Mammary epithelial cell (primary cell): ENCODE measurements at regions of chr19 and their contacts with region 1.

Region 1: GRCh38 chr19:12796146-12797071 is 5.1 kb downstream of the JUNB start:
- DNase-seq: peak; percentile 58
- H3K4me3 ChIP-seq: no peak overlapping the region
- H3K27ac ChIP-seq: no peak overlapping the region
- H3K4me1 ChIP-seq: peaks cover 24% of the 10 kb centered on the region
- H3K27me3 ChIP-seq: no peaks in the 10 kb centered on the region
- CTCF ChIP-seq: peak; percentile 97

Region 2: DNA sequence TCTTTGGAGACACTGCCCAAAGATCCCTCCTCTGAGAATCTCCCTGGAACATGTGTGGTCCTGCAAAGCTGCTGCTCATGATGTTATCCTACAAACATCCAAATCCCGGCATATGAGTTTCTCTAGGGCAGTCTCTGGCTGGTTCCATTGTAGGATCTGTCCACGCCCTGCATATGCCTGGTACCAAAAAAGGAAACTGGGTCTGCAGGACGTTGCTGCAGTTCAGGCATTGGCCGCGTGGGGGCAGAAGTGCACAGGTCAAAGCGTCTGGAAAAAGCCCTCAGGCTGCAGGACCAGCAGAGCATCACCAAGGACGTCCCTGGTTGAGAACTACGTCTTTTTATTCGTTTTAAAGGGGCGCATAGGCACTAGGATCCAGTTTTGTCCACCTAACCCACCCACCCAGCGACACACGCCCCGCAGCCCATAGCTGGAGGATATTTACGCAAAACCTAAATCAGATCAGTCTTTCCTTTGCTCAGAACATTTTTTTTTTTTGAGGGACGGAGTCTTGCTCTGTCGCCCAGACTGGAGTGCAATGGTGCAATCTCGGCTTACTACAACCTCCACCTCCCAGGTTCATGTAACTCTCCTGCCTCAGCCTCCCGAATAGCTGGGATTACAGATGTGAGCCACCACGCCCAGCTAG is 232.3 kb before region 1 on chr19:
- CTCF ChIA-PET with region 1: no interaction called
- dilution Hi-C with region 1: no loop called
- in situ Hi-C with region 1: no loop called
- intact Hi-C with region 1: loop called (anchors 2 kb)
- DNase-seq: peak; percentile 88
- H3K4me3 ChIP-seq: no peak overlapping the region
- H3K27ac ChIP-seq: no peak overlapping the region
- H3K4me1 ChIP-seq: no peaks in the 10 kb centered on the region
- H3K27me3 ChIP-seq: no peaks in the 10 kb centered on the region
- CTCF ChIP-seq: peak; percentile 96 to 97

Region 3: GRCh38 chr19:12669270-12670158 is 126.9 kb before region 1 on chr19:
- CTCF ChIA-PET with region 1: no interaction called
- dilution Hi-C with region 1: no loop called
- in situ Hi-C with region 1: no loop called
- intact Hi-C with region 1: no loop called
- DNase-seq: peak; percentile 79
- H3K4me3 ChIP-seq: peak overlapping the region; percentile 69 to 87 (median 86)
- H3K27ac ChIP-seq: peak overlapping the region; percentile 96
- H3K4me1 ChIP-seq: peaks cover 34% of the 10 kb centered on the region
- H3K27me3 ChIP-seq: no peaks in the 10 kb centered on the region
- CTCF ChIP-seq: no peak

Region 4: DNA sequence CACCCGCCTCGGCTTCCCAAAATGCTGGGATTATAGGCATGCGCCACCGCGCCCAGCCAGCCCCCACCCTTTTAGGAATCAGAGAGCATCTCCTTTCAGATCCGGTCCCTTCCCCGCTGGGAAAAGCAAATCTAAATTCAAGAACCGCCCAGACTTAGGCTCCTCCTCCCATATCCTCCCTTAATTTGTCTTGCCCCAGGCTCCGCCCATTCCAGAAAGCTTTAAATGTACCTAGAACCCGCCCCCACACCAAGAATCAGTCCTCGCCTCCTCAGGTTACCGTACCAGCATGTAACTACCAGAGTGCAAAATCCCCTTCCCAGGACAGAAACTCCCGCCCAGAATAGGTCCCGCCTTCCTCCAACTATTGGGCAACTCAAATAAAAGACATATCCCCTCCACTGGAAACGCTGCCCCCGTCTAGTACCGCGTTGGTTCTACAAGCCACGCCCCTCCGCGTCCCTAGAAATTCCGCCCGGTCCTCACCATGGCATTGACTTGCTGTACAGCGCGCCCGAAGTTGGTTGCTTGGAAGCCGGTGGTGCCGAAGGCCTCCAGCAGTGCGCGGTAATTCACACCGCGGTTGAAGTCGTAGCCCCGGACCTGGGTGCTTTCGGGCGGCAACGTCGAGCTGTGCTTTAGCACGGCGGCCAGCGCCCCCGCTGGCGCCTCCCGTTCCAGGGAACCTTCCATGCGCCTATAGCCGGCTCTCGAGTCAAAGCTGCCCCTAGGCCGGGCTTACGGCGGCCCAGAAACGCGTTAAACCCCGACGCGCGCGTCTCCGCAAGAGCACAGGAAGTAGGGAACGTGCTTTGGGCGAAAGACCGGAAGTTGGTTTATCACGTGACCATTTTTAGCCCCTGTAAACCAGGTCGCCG is 115.1 kb before region 1 on chr19 and contains the start of gene DHPS:
- CTCF ChIA-PET with region 1: no interaction called
- dilution Hi-C with region 1: no loop called
- in situ Hi-C with region 1: no loop called
- intact Hi-C with region 1: loop called (anchors 2 kb)
- DNase-seq: peak; percentile 97
- H3K4me3 ChIP-seq: peak within 1 kb of the TSS; percentile 81 to 89 (median 83)
- H3K27ac ChIP-seq: peak within 1 kb of the TSS; percentile 95
- H3K4me1 ChIP-seq: no peaks in the 10 kb centered on the region
- H3K27me3 ChIP-seq: no peaks in the 10 kb centered on the region
- CTCF ChIP-seq: no peak
- total RNA-seq, gene DHPS: 46.5 to 73.8 TPM

Region 5: GRCh38 chr19:12706332-12706718 is 90.1 kb before region 1 on chr19:
- CTCF ChIA-PET with region 1: no interaction called
- dilution Hi-C with region 1: no loop called
- in situ Hi-C with region 1: no loop called
- intact Hi-C with region 1: no loop called
- DNase-seq: no peak
- H3K4me3 ChIP-seq: no peak overlapping the region
- H3K27ac ChIP-seq: no peak overlapping the region
- H3K4me1 ChIP-seq: no peaks in the 10 kb centered on the region
- H3K27me3 ChIP-seq: no peaks in the 10 kb centered on the region
- CTCF ChIP-seq: no peak

Region 6: DNA sequence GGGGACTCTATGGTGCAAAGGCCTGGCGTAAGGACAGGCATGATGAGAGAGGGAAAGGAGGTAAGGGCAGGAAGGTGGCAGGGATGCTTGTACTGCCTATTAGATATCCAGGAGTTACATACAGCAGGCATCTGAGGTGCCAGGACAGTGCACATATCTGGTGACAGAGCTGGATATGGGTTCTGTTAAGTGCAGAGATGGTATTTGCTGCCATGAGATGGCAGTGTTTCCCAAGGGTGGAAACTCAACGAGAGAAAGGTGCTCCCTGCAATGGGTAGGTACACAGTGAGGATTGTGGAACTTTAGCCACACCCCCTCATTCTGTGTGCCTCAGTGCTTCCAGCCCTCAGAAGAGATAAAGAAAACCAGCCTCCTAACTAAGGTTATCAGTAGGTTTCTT is 79.5 kb before region 1 on chr19:
- CTCF ChIA-PET with region 1: no interaction called
- dilution Hi-C with region 1: no loop called
- in situ Hi-C with region 1: no loop called
- intact Hi-C with region 1: loop called (anchors 1 kb)
- DNase-seq: peak; percentile 59
- H3K4me3 ChIP-seq: no peak overlapping the region
- H3K27ac ChIP-seq: no peak overlapping the region
- H3K4me1 ChIP-seq: peaks cover 19% of the 10 kb centered on the region
- H3K27me3 ChIP-seq: no peaks in the 10 kb centered on the region
- CTCF ChIP-seq: peak; percentile 40 to 59

Region 7: GRCh38 chr19:12757544-12758274 is 38.7 kb before region 1 on chr19:
- CTCF ChIA-PET with region 1: no interaction called
- dilution Hi-C with region 1: loop called (anchors 5 kb)
- in situ Hi-C with region 1: no loop called
- intact Hi-C with region 1: loop called (anchors 1 kb)
- DNase-seq: peak; percentile 55
- H3K4me3 ChIP-seq: peak overlapping the region in 2 of 3 experiments; percentile 32 to 38
- H3K27ac ChIP-seq: no peak overlapping the region
- H3K4me1 ChIP-seq: peaks cover 7% of the 10 kb centered on the region
- H3K27me3 ChIP-seq: no peaks in the 10 kb centered on the region
- CTCF ChIP-seq: peak; percentile 82 to 92

Region 8: DNA sequence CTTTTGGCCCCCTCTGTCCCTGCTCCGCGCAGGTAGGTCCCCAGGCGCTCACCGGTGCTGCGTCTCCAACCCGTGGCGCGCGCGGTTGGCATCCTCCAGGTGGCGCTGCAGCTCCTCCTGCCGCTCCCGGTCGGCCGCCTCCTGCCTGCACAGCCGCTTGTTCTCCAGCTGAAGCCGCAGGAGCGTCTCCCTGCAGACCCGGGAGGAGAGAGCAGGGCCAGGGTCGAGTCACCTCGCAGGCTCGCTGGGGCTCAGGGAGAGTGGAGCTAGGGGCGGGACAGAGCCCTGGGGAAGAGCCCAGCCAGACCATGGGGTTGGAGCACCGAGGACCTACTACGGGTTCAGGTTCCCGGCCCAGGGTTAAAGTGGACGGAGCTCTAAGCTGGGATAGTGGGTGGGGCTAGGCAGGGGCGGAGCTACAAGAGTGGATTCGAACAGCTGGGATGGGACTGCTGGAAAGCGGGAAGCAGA is 30.3 kb before region 1 on chr19:
- CTCF ChIA-PET with region 1: interaction called, 10 read pairs
- dilution Hi-C with region 1: loop called (anchors 5 kb)
- in situ Hi-C with region 1: no loop called
- intact Hi-C with region 1: loop called (anchors 1 kb)
- DNase-seq: peak; percentile 76
- H3K4me3 ChIP-seq: peak overlapping the region in 2 of 3 experiments; percentile 40 to 46
- H3K27ac ChIP-seq: no peak overlapping the region
- H3K4me1 ChIP-seq: no peaks in the 10 kb centered on the region
- H3K27me3 ChIP-seq: no peaks in the 10 kb centered on the region
- CTCF ChIP-seq: peak; percentile 29 to 67

Region 9: GRCh38 chr19:12777217-12778016 is 19.0 kb before region 1 on chr19:
- CTCF ChIA-PET with region 1: interaction called, 22 read pairs
- dilution Hi-C with region 1: no loop called
- in situ Hi-C with region 1: no loop called
- intact Hi-C with region 1: loop called (anchors 1 kb)
- DNase-seq: peak; percentile 63
- H3K4me3 ChIP-seq: peak overlapping the region; percentile 56 to 73 (median 61)
- H3K27ac ChIP-seq: peak overlapping the region; percentile 77
- H3K4me1 ChIP-seq: peaks cover 47% of the 10 kb centered on the region
- H3K27me3 ChIP-seq: no peaks in the 10 kb centered on the region
- CTCF ChIP-seq: peak; percentile 70 to 96